Activated T-helper 1 cell treated with anti-CD3 and anti-CD28 coated beads, Interleukin-12 subunit alpha, Interleukin-12 subunit beta, Interleukin-2, Interleukin-4 antibody, amounts not matched to agents 30 ng/mL and 10 ng/mL and 1 ng/mL, durations not matched to agents 14 hours and 24 hours and 36 hours (primary cell): ENCODE measurements at regions of chr7 and their contacts with region 1.

Region 1: DNA sequence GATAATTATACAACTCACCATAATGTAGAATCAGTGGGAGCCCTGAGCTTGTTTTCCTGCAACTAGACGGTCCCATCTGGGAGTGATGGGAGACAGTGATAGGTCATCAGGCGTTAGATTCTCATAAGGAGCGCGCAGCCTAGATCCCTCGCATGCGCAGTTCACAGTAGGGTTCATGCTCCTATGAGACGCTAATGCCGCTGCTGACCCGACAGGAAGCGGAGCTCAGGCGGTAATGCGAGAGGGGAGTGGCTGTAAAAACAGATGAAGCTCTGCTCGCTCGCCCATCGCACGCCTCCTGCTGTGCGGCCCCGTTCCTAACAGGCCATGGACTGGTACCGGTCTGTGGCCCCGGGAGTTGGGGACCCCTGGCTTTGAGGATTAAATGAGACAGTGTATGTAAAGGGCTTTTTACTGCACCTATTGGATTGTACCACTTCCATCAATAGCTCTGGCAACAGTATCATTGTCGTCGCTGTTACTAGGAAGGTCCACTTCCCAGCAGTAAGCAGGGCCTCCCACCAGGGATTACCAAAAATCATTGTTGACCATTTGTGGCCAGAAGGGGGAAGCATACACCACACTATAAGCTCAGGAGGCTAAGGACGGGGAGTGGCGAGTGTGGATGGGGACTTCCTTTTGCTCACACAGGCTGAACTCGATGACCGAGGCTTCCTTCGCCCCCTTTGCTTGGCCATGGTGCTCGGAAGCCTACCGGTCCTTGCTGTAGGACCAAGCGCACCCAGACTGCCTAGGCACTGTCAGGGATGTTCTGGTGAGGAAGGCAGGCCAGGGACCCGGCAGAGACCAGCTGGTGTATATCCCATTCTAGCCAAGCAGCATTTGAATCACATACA is 26.4 kb downstream of the AKR1B1 start:
- DNase-seq: peak; percentile 61
- H3K4me3 Mint-ChIP-seq: peak overlapping the region; percentile 78
- H3K27ac Mint-ChIP-seq: peak overlapping the region; percentile 79
- H3K4me1 Mint-ChIP-seq: peaks cover 23% of the 10 kb centered on the region
- H3K27me3 Mint-ChIP-seq: peaks cover 3% of the 10 kb centered on the region

Region 2: DNA sequence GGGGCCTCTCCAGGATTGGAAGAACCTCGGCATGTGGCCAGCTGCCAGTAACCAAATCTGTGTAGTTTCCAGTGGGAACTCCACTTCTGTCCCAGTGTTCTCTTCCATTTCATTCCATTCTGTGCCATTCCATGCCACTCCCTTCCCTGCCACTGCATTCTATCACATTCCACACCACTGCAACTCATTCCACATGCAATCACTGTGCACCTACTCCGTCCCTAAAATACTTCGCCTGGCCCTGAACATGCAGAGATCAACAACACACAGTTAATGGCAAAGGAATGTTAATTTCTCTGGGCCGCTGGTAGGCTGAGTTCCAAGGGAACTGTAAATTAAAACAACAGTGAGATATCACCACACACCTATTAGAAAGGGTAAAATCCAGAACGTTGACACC is 38.5 kb before region 1 on chr7:
- intact Hi-C with region 1: no loop called
- DNase-seq: no peak
- H3K4me3 Mint-ChIP-seq: no peak overlapping the region
- H3K27ac Mint-ChIP-seq: no peak overlapping the region
- H3K4me1 Mint-ChIP-seq: no peaks in the 10 kb centered on the region
- H3K27me3 Mint-ChIP-seq: peaks cover under 1% of the 10 kb centered on the region

Region 3: DNA sequence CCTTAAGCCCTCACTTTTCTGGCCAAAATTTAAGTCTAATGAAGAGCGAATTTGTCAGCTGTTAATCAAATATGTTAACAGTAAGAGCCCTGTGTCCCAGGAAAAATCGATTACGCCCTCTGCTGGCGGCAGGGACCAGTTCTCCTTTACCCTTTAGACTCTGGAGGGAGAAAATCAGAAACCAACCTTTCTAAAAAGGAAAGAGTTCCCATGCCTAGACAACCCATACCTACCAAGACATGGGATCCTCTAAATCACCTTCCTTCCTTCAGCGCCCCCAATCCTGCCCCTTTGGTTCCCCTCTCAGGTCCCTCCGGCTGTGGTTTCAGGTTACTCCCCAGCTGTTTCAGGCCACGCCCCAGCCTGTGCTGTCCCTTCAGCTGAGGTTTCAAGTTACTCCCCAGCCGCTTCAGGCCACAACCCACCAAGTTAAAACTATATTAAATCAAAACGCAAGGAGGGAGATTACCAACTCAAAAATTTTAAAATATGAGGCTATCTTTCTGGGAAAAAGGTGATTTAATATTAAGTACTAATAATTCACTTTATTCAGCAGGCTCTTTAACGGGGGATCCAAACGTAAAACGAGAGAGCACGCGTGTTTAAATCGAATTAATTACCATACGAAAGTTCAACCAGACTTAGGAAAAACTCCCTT is 115.0 kb after region 1 on chr7:
- intact Hi-C with region 1: loop called (anchors 1 kb)
- DNase-seq: peak; percentile 32
- H3K4me3 Mint-ChIP-seq: no peak overlapping the region
- H3K27ac Mint-ChIP-seq: no peak overlapping the region
- H3K4me1 Mint-ChIP-seq: peaks cover 12% of the 10 kb centered on the region
- H3K27me3 Mint-ChIP-seq: peaks cover 11% of the 10 kb centered on the region